ENCODE measurements at regions of chr15 and their contacts with region 1.

Region 1: DNA sequence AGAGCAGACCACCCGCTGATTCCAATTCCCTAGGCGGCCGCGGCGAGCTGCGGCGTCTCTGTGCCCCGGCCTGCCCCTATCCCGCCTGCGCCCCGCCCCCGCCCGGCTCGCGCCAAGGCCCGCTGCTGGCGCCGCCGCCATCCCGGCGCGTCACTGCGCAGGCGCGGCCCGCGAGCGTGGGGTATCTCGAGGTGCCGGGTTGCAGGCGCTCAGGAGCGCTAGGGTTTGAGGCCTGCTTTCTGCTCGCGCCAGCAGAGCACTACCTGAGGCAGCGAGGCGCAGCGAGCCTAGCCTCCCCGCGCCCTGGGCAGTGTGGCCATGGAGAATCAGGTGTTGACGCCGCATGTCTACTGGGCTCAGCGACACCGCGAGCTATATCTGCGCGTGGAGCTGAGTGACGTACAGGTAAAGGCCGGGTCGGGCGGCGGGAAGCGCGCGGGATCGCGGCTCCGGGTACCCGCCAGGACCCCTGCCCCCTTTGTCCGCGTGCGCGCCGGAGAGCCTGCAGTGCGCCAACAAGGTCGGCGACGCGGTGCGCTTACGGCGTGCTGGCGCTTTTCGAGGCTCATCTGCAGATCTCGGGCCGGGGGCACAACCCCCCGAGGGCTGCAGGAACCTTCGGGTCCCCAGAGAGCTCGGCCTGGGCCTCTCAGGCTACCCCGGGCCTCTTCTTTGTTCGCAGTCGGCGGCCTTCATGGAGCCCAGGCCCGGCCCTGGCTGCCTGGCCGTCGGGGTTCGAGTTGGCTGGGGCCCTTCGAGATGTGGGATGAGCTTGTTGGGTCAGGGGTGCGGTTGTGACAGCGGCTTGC is at the start of gene HACD3:
- DNase-seq: peak; percentile 83 to 93
- H3K4me3 ChIP-seq: peak within 1 kb of the TSS; percentile 99
- H3K4me3 Mint-ChIP-seq: peak within 1 kb of the TSS; percentile 67
- H3K27ac Mint-ChIP-seq: peak within 1 kb of the TSS; percentile 47
- H3K4me1 ChIP-seq: peaks cover 17% of the 10 kb centered on the region
- H3K4me1 Mint-ChIP-seq: peaks cover 33% of the 10 kb centered on the region
- H3K27me3 ChIP-seq: no peaks in the 10 kb centered on the region
- H3K27me3 Mint-ChIP-seq: no peaks in the 10 kb centered on the region
- CTCF ChIP-seq: no peak
- total RNA-seq, gene HACD3: 118 and 127 TPM in 2 replicates

Region 2: DNA sequence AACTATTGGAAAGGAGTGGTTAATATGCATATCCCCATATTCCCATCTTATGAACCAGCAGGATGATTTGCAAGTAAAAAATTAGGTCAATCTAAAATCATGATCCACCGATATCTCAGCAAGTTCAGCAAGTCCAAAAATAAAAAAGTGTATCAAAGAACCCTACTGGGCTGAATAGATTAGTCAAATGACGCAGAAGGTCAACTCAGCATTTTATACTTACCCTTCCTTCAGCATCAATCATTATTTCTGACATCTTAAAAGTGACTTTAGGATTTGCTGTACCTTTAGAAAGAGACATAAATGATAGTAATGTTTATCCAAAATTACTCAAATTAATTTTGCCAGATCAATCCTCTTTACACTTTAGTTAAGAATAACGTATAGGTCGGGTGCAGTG is 45.6 kb before region 1 on chr15:
- CTCF ChIA-PET with region 1: no interaction called
- POLR2A ChIA-PET with region 1: no interaction called
- intact Hi-C with region 1: no loop called
- DNase-seq: no peak
- H3K4me3 ChIP-seq: no peak overlapping the region
- H3K4me3 Mint-ChIP-seq: no peak overlapping the region
- H3K27ac Mint-ChIP-seq: no peak overlapping the region
- H3K4me1 ChIP-seq: no peaks in the 10 kb centered on the region
- H3K4me1 Mint-ChIP-seq: no peaks in the 10 kb centered on the region
- H3K27me3 ChIP-seq: no peaks in the 10 kb centered on the region
- H3K27me3 Mint-ChIP-seq: no peaks in the 10 kb centered on the region
- CTCF ChIP-seq: no peak

Region 3: DNA sequence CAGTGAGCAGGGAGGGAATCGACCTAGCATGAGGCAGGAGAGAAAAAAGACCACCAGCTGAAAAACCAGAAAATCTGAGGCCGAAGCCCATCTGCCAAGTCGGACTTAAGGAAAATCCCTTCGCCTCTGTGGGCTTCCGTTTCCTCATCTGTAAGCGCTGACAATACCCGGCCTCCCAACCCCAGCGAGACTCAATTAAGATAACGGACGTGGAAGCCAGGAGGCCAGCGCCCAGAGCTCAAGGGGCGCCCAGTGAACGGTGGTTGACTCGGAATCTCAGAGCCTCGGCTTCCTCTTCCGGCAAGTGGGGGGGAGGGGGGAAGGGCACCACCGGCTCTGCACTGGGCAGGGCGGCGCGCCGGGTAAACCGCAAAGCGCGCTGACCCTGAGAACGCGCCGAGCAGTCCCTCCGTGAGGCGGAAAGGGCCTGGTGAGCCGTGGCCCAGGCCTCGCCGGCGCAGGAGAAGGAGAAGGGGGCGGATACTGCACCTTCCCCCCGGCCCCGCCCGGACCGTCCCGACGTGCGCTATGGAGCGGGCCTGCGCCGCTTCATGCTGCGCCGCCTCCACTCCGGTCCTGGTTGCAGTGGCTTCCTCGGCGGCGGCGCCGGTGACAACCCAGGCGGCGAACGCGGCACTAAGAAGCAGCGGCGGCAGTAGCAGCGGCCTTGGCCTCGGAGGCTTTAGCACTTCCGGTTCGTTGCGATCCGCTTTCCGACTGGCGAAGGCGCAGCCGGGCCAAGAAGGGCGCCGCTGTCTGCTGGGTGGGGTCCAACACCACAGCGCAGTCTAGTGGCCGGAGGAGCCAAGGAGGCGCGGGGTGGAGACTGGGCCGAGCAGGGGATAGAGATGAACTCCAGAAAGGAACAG is 13.3 kb before region 1 on chr15 and contains the start of gene DPP8:
- CTCF ChIA-PET with region 1: interaction called, 4 read pairs
- POLR2A ChIA-PET with region 1: interaction called, 21 read pairs
- intact Hi-C with region 1: loop called (anchors 2 kb)
- DNase-seq: peak; percentile 93 to 97
- H3K4me3 ChIP-seq: peak within 1 kb of the TSS; percentile 88
- H3K4me3 Mint-ChIP-seq: peak within 1 kb of the TSS; percentile 96
- H3K27ac Mint-ChIP-seq: peak within 1 kb of the TSS; percentile 85
- H3K4me1 ChIP-seq: peaks cover 7% of the 10 kb centered on the region
- H3K4me1 Mint-ChIP-seq: no peaks in the 10 kb centered on the region
- H3K27me3 ChIP-seq: no peaks in the 10 kb centered on the region
- H3K27me3 Mint-ChIP-seq: no peaks in the 10 kb centered on the region
- CTCF ChIP-seq: peak; percentile 43 to 98
- total RNA-seq, gene DPP8: 22.9 and 23.4 TPM in 2 replicates

Region 4: GRCh38 chr15:65595960-65596359 is 65.4 kb after region 1 on chr15:
- CTCF ChIA-PET with region 1: no interaction called
- POLR2A ChIA-PET with region 1: no interaction called
- intact Hi-C with region 1: no loop called
- DNase-seq: peak in 1 of 2 experiments; percentile 36
- H3K4me3 ChIP-seq: no peak overlapping the region
- H3K4me3 Mint-ChIP-seq: no peak overlapping the region
- H3K27ac Mint-ChIP-seq: no peak overlapping the region
- H3K4me1 ChIP-seq: no peaks in the 10 kb centered on the region
- H3K4me1 Mint-ChIP-seq: no peaks in the 10 kb centered on the region
- H3K27me3 ChIP-seq: no peaks in the 10 kb centered on the region
- H3K27me3 Mint-ChIP-seq: no peaks in the 10 kb centered on the region
- CTCF ChIP-seq: peak; percentile 42 to 56

Measured in Caco-2 (cell line).